ENCODE measurements at regions of chr2 and their contacts with region 1.

Region 1: DNA sequence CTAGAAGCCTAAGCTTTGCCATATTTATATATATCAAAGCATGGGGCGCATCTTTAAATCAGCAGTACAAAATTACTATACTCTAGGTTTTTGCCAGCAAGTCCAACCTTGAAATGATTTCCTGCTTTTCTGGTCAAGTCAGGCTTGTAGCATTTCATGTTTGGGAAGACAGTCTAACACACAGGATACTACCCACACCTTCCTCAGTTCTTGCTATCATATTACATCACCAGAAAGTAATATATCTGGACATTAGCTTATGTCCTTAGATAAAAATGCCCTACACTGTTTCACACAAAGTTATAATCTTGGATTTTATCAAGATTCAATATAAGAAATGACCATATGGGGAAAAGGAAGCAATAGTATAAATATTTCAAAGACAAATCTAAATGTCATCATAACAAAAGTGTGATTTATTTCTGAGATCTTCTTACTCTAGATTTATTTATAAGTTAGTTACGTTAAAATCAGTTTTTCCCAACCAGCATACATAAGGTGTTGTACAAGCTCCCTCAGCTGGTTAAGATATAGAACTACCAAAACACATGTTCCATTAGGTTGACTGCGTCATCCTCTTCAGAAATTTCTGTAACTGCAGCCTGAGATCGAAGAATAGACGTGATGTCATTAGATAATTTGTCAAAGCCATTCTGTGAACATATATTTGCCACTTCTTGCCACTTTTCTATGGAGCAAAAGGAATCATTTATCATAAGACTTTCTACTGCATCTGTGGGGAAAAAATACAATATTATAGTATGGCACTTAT is 56.7 kb downstream of the CLHC1 start:
- DNase-seq: no peak

Region 2: DNA sequence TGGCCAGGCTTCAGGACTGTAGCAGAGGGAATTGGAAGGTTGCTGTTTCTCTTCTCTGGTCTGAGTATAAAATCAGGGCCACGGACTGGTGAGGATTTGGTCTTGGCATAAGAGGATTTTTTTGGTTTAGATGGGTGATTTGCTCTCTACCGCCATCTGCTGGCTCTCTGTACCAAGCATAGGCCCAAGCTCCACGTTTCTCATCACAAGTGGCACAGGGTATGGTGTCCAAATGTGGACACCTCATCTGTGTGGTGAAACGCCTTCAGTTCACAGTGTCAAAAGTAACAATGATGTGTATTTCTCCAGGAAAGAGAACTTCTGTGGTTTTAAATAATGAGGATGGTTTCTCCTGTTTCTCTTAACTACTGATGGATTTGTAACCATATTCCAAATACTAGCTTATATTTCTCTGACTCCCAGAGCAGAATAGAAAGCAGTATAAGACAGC is 336.8 kb before region 1 on chr2:
- intact Hi-C with region 1: loop called (anchors 5 kb)
- DNase-seq: peak in 8 of 10 donors; percentile 31 to 92 (median 70)

Region 3: GRCh38 chr2:54899576-54900200 is 275.8 kb before region 1 on chr2:
- intact Hi-C with region 1: loop called (anchors 2 kb)
- DNase-seq: peak in 1 of 10 donors; percentile 25

Region 4: DNA sequence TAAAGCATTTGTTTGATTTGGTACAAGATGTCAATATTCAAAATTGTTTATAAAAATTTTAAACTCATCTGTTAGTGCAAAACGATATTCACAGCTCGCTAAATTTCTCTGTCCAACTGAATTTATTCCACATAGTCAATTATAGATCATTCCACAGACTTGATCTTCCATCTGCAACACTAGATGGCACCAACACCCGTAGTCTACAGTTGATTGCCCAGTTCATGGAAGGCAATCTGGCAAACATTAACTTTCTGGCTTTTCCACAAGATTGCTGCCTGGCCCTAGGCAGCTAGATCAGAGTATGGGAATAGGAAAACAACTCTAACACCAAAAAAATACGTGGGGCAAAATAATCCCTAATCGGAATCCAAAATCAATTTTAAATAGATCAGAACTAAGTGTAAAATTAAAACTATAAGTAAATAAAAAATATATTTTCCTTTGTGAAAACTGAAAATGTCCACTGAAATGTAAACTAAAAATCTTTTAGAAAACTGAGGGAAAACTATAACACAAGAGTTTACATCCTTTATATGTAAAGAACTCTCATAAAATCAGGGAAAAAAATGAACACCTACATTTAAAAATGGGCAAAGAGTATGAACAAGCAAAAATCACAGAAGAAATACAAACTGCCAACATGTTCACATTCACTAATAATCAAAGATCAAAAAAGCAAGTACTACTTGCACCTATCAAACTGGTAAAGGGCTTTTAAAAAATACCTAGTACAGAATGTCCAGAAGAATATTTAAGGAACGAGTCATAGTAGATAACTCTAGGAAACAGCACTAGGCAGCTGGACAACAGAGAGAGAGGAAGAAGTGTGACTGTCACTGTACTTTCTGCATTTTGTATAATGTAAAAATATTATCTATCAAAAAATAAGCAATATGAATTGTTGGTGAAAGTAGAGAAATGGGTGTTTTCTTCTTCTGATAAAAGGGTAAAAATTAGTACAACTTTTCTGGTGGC is 160.2 kb before region 1 on chr2:
- intact Hi-C with region 1: loop called (anchors 2 kb)
- DNase-seq: peak in 6 of 10 donors; percentile 29 to 84 (median 42)

Measured in posterior cingulate gyrus (tissue), 11 donors.